H1 (cell line): ENCODE measurements at regions of chr13 and their contacts with region 1.

Region 1: DNA sequence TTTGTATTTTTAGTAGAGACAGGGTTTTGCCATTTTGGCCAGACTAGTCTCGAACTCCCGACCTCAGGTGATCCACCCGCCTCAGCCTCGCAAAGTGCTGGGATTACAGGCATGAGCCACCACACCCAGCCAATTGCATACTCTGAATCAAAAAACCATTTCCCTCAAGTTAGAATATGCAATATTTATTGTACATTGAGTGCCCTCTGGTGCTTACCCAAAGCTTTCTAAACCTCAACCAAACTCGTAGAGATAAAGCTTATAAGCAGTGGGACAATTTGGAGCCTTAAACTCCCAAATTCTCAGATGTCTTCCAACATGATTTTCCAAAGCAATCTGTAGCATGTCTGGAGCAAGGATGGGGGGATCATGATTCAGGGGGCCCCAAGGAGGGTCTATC is 22.4 kb downstream of the RFXAP start:
- DNase-seq: no peak
- H3K4me3 ChIP-seq: no peak overlapping the region
- H3K27ac ChIP-seq: no peak overlapping the region
- H3K4me1 ChIP-seq: peaks cover 0 to 6% (median 1%) of the 10 kb centered on the region in 4 experiments; a peak in 1 of 7 replicates
- H3K27me3 ChIP-seq: no peaks in the 10 kb centered on the region
- CTCF ChIP-seq: no peak
- EP300 ChIP-seq: no peak
- POLR2A ChIP-seq: no peak
- RAD21 ChIP-seq: no peak

Region 2: GRCh38 chr13:36453516-36453915 is 387.9 kb before region 1 on chr13:
- CTCF ChIA-PET with region 1: interaction called, 11 read pairs
- POLR2A ChIA-PET with region 1: no interaction called
- DNase-seq: no peak
- H3K4me3 ChIP-seq: no peak overlapping the region
- H3K27ac ChIP-seq: no peak overlapping the region
- H3K4me1 ChIP-seq: peaks cover 2 to 9% (median 7%) of the 10 kb centered on the region in 4 experiments; a peak in 4 of 7 replicates
- H3K27me3 ChIP-seq: no peaks in the 10 kb centered on the region
- CTCF ChIP-seq: peak in 2 of 3 experiments; percentile 56 to 57; a peak in 3 of 4 replicates
- EP300 ChIP-seq: no peak
- POLR2A ChIP-seq: no peak
- RAD21 ChIP-seq: peak; percentile 85 to 89

Region 3: DNA sequence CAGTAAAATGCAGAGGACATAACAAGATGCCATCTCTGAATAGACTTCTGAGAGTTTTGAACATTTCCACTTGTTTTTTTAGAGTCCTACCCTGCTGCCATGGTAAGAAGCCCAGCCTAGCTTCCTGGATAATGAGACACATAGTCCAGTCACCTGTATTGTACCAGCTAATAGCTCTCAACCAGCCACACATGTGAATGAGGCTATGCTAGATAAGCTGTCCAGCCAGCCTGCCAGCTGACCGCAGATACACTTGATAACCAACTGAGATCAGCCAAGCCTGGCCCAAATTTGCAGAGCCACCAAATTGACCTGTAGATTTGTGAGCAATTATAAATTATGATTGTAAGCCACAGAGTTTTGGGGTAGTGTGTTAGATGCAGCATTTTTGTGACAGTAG is 11.6 kb before region 1 on chr13:
- CTCF ChIA-PET with region 1: interaction called, 10 read pairs
- POLR2A ChIA-PET with region 1: no interaction called
- DNase-seq: no peak
- H3K4me3 ChIP-seq: no peak overlapping the region
- H3K27ac ChIP-seq: no peak overlapping the region
- H3K4me1 ChIP-seq: no peaks in the 10 kb centered on the region
- H3K27me3 ChIP-seq: no peaks in the 10 kb centered on the region
- CTCF ChIP-seq: no peak
- EP300 ChIP-seq: no peak
- POLR2A ChIP-seq: no peak
- RAD21 ChIP-seq: no peak